Heart right ventricle (tissue), 16 donors: ENCODE measurements at regions of chr11 and their contacts with region 1.

Region 1: DNA sequence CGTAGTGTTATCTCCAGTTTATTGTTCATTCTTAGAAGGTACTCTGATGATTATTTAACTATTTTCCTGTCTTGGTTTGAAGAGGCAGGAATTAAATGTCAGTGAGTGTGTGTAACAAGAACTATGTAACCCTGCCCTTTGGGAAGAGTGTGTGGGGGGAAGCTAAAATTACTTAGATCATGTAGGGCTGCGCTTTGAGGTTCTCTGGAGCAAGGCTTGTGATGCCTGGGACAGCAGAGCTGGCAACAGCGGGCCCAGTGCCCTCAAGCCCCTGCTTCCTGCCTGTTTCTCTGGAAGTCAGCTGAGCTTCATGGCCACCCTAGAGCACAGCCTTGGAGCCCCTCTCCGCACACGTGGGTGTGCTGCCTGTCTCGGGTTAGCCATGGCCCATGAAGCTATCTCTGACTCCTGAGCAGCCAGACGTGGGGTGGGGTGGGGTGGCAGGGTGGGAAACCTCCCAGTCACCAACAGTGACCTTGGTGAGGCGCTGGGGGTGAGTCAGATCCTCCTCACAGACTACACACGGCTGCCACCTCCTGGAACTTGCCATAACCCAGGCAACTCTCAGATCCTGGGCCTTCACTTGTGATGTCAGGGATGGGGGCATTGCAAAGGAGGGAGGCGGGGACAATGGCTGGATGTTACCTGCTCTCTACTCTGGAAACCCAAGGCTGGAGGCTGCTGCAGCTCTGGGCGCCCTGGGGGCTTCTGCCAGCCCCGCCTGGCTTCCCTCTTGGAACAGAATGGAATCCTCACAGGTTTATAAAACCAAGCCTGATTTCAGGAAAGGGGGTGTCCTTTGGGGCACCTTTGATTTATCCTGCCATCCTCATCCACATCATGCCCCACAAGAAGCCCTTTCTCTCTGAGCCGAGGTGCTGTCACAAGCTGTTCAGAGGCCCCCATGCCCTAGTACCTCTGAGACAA is 88.6 kb downstream of the SNX19 start:
- DNase-seq: peak; percentile 63 to 64
- ATAC-seq: peak; percentile 76 to 92 (median 88)
- H3K4me3 ChIP-seq: no peak overlapping the region
- H3K27ac ChIP-seq: peak overlapping the region in 9 of 10 donors; percentile 36 to 73 (median 64)
- H3K4me1 ChIP-seq: peaks cover 3 to 43% (median 28%) of the 10 kb centered on the region in 9 donors
- H3K27me3 ChIP-seq: no peaks in the 10 kb centered on the region
- CTCF ChIP-seq: peak in 8 of 9 donors; percentile 44 to 64 (median 53)

Region 2: GRCh38 chr11:130644187-130644586 is 183.5 kb before region 1 on chr11:
- intact Hi-C with region 1: loop called in 1 of 10 experiments (anchors 10 kb)
- DNase-seq: no peak
- ATAC-seq: no peak
- H3K4me3 ChIP-seq: no peak overlapping the region
- H3K27ac ChIP-seq: no peak overlapping the region
- H3K4me1 ChIP-seq: peaks cover 0 to 34% (median 16%) of the 10 kb centered on the region in 9 donors
- H3K27me3 ChIP-seq: no peaks in the 10 kb centered on the region
- CTCF ChIP-seq: no peak

Region 3: DNA sequence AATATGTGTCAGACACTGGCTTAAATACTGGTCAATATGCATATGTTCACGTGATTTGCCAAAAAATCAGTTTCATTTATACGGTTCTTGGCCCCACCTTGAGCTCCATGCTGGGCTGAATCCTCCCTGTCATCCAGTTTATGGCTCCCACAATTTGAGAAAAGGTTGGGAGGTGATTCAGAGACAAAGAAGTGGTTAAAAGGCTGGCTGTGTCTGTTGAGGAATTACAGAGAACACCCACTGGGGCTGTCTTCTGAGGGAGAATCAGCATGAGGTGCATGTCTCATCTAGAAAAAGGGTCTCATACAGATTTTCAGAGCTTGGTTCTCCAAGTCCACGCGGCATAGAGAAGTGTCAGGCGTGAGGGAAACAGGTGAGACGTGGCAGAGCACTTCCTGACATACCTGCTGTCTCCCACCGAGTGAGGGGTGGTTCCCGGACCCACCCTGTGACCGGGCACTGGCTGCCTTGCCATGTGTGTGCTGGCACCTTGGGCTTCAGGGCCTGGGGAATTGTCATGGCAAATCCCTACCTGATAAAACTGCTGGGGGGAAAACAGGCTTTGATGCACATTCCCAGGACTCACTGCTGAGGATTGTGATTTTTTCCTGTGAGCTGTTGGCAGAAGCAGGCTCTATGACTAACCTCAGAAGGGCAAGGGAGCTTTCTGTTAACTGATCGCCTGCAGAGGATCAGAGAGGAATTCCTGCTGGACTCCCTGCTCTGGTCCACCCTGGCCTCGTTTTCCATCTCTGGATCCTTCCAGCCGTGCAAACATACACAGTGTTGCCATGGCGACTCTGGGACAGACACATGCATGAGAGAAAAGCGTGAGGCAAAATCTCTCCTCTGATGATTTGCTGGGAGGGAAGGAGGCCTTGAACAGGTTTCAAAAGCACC is 155.7 kb before region 1 on chr11:
- intact Hi-C with region 1: loop called in 3 of 10 experiments (anchors 2 to 10 kb)
- DNase-seq: peak; percentile 59 to 83
- ATAC-seq: peak; percentile 56 to 85 (median 74)
- H3K4me3 ChIP-seq: no peak overlapping the region
- H3K27ac ChIP-seq: peak overlapping the region in 8 of 10 donors; percentile 15 to 57 (median 49)
- H3K4me1 ChIP-seq: peaks cover 8 to 49% (median 43%) of the 10 kb centered on the region in 9 donors
- H3K27me3 ChIP-seq: no peaks in the 10 kb centered on the region
- CTCF ChIP-seq: no peak

Region 4: DNA sequence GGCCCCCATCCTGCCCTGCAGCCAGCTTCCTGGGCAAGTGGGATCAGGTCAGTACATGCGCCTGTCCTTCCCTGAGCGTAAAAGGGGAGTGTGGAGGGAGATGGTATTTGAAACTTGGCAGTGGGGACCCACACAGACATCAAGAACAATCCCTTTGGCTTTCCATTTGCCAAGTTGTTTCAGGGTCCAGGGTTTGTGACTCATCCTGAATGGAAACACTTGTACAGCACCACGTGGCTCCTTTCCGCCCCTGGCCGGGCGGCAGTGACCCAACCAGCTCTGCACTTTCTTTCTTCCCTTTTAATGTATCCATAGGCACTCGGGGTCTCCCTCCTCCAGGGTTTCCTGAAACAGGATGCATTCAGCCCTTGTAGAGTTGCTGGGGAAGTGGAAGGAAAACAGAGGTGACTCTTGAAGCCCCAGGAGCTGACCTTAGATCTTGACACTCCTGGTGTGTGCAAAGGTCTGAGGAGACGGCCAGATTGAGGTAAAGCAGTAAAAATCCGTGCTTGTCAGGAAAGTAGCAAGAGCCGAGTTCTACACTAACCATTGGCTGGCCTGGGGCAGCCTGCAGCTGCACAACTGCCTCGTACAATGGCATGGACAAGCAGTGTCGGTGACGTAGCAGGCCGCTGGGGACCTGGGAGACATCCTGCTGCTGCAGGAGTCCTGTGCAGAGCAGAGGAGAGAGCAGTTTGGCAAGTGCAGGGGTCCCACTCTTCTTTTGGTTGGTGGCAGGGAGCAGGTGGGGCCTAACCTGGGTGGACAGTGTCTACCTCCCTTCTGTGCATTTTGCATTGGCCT is 101.3 kb before region 1 on chr11:
- intact Hi-C with region 1: loop called in 2 of 10 experiments (anchors 10 kb)
- DNase-seq: peak; percentile 48 to 61
- ATAC-seq: peak; percentile 83 to 95 (median 90)
- H3K4me3 ChIP-seq: no peak overlapping the region
- H3K27ac ChIP-seq: peak overlapping the region in 8 of 10 donors; percentile 23 to 81 (median 63)
- H3K4me1 ChIP-seq: peaks cover 10 to 42% (median 29%) of the 10 kb centered on the region in 9 donors
- H3K27me3 ChIP-seq: no peaks in the 10 kb centered on the region
- CTCF ChIP-seq: no peak

Region 5: GRCh38 chr11:130772266-130773227 is 55.2 kb before region 1 on chr11:
- intact Hi-C with region 1: no loop called
- DNase-seq: no peak
- ATAC-seq: peak in 7 of 8 donors; percentile 18 to 70 (median 27)
- H3K4me3 ChIP-seq: no peak overlapping the region
- H3K27ac ChIP-seq: peak overlapping the region in 2 of 10 donors; percentile 4 to 9
- H3K4me1 ChIP-seq: peaks cover 5 to 45% (median 24%) of the 10 kb centered on the region in 9 donors
- H3K27me3 ChIP-seq: no peaks in the 10 kb centered on the region
- CTCF ChIP-seq: no peak